B cell (primary cell): ENCODE measurements at regions of chr5 and their contacts with region 1.

Region 1: DNA sequence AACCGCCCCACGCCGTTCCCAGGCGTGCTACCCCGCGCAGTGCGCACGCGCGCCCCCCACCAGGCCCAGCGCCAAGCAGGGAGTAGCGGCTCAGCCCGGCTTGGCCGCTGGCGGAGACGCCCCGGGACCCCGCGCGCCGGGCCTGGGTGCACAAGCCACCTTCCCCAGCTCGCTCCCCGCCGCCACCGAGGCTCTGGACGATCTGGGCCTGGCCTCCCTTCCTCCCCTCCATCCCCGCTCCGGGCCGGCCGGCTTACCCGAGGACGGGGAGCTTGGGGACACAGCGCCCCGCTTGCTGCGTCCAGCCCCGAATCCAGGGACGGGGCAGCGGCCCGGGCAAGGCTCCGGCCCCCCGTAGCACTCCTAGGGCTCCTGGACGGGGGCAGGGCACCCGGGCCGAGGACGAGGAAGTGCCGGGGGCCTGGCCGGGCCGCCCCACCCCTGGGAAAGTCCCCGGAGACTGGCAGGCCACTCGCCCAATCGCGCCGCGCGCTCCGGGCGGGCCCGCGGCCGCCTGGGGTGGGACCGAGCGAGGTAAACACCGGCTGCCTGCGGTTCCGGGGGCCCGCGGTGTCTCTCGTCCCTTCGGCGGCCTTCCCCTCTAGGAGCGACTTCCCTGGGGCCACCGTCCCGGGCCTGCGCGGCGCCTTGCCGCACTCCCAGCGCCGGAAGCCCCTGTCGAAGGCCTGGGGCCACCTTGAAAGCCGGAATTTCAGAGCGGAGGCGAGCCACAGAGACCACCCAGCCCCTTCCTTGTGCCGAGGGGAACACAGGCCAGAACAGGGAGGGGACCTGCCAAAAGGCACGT is at the start of gene TNIP1:
- DNase-seq: peak; percentile 96
- ATAC-seq: peak; percentile 88
- H3K4me3 ChIP-seq: peak within 1 kb of the TSS; percentile 71 to 96 (median 85)
- H3K4me3 Mint-ChIP-seq: peak within 1 kb of the TSS; percentile 87
- H3K27ac ChIP-seq: peak within 1 kb of the TSS; percentile 96 to 100
- H3K27ac Mint-ChIP-seq: peak within 1 kb of the TSS; percentile 88
- H3K4me1 ChIP-seq: peaks cover 83 to 84% of the 10 kb centered on the region in 2 donors
- H3K4me1 Mint-ChIP-seq: peaks cover 82% of the 10 kb centered on the region
- H3K27me3 ChIP-seq: no peaks in the 10 kb centered on the region
- H3K27me3 Mint-ChIP-seq: no peaks in the 10 kb centered on the region
- CTCF ChIP-seq: no peak
- total RNA-seq, gene TNIP1: 294 and 295 TPM in 2 replicates

Region 2: GRCh38 chr5:149114403-149115312 is 1966.2 kb before region 1 on chr5:
- CTCF ChIA-PET with region 1: no interaction called
- POLR2A ChIA-PET with region 1: no interaction called
- intact Hi-C with region 1: no loop called
- DNase-seq: peak; percentile 21
- ATAC-seq: no peak
- H3K4me3 ChIP-seq: no peak overlapping the region
- H3K4me3 Mint-ChIP-seq: no peak overlapping the region
- H3K27ac ChIP-seq: no peak overlapping the region
- H3K27ac Mint-ChIP-seq: no peak overlapping the region
- H3K4me1 ChIP-seq: no peaks in the 10 kb centered on the region
- H3K4me1 Mint-ChIP-seq: no peaks in the 10 kb centered on the region
- H3K27me3 ChIP-seq: no peaks in the 10 kb centered on the region
- H3K27me3 Mint-ChIP-seq: peaks cover 31% of the 10 kb centered on the region
- CTCF ChIP-seq: peak; percentile 44

Region 3: DNA sequence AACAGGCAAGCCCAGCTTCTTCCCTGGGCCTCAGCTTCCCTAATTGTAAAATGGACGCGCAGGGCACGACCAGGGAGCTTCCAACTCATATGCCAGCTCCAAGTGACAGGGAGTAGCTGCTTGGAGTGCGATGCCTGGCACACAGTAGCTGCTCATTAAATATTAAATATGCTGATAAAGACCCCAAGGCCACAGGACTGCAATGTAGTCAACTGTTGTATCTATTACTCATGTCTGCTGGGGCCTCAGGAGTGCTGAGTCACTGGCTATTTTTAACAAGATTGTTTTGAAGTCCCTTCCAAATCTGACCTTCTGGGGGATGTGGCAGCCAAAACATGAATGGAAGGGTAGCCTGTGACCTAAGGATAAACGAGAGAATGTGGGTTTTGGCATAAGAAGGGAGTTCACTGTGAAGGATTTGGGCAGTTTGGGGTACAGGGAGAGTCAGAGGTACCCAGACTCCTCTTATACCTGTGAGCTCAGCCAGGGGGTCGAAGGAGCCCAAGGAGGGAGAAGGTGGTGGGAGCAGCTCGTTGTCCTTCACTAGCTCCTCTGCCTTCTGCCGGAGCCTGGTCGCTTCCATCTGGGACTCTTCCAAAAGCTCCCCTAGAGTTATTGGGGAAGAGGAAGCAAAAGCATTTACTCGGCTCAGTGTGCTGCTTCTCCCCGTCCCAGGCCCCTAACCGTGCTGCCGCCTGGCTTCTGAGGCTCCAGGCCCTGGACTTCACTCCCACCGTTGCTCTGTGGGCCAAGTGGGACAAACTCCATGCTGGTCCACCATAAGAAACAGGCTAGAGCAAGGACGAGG is 17.5 kb before region 1 on chr5:
- CTCF ChIA-PET with region 1: interaction called, 6 read pairs
- POLR2A ChIA-PET with region 1: interaction called, 13 read pairs
- intact Hi-C with region 1: loop called (anchors 1 kb)
- DNase-seq: no peak
- ATAC-seq: no peak
- H3K4me3 ChIP-seq: no peak overlapping the region
- H3K4me3 Mint-ChIP-seq: no peak overlapping the region
- H3K27ac ChIP-seq: no peak overlapping the region
- H3K27ac Mint-ChIP-seq: peak overlapping the region; percentile 72
- H3K4me1 ChIP-seq: peaks cover 44 to 54% of the 10 kb centered on the region in 2 donors
- H3K4me1 Mint-ChIP-seq: peaks cover 69% of the 10 kb centered on the region
- H3K27me3 ChIP-seq: no peaks in the 10 kb centered on the region
- H3K27me3 Mint-ChIP-seq: no peaks in the 10 kb centered on the region
- CTCF ChIP-seq: no peak

Region 4: DNA sequence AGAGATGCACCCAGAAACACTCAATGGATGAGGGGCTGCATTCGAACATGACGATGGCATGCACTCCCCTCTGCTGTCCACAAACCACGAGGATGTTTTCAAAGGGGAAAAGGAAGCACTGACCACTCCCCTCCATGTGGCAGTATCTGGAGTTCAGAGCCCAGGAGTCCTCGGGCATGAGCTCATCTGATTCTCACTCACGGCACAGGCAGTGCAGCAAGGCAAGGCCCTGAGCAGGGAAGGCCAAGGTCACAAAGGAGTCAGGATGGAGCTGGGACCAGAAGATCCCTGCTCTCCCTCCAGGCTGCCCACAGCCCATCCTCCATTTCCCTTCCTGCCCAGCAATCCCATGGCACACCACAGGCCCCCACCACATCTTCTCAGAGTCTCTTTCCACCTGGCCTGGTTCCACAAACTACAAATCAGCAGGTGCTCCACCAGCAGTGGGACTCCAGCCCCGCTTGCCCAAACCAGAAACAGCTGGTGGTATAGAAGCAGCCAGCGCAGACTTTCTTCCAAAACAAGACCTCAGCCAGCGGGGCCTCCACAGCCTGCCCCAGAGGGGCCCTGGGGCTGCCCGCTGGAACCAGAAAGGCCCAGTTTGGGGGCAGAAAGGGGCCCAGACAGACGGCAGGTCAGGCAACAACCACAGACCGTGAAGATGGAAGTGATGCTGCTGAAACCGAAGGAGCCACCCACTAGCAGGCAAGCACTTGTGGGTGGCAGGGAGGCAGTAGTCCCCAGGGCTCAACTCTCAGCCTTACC is 12.2 kb before region 1 on chr5:
- CTCF ChIA-PET with region 1: interaction called, 20 read pairs
- POLR2A ChIA-PET with region 1: interaction called, 13 read pairs
- intact Hi-C with region 1: loop called (anchors 1 kb)
- DNase-seq: peak; percentile 43
- ATAC-seq: peak; percentile 78
- H3K4me3 ChIP-seq: peak overlapping the region in 1 of 5 experiments; percentile 5
- H3K4me3 Mint-ChIP-seq: peak overlapping the region; percentile 52
- H3K27ac ChIP-seq: peak overlapping the region in 1 of 2 donors; percentile 62
- H3K27ac Mint-ChIP-seq: peak overlapping the region; percentile 88
- H3K4me1 ChIP-seq: peaks cover 36 to 55% of the 10 kb centered on the region in 2 donors
- H3K4me1 Mint-ChIP-seq: peaks cover 73% of the 10 kb centered on the region
- H3K27me3 ChIP-seq: no peaks in the 10 kb centered on the region
- H3K27me3 Mint-ChIP-seq: no peaks in the 10 kb centered on the region
- CTCF ChIP-seq: no peak

Region 5: GRCh38 chr5:151094054-151094851 is 13.4 kb after region 1 on chr5:
- CTCF ChIA-PET with region 1: interaction called, 12 read pairs
- POLR2A ChIA-PET with region 1: interaction called, 4 read pairs
- intact Hi-C with region 1: loop called (anchors 1 kb)
- DNase-seq: peak; percentile 79
- ATAC-seq: peak; percentile 76
- H3K4me3 ChIP-seq: peak overlapping the region in 2 of 5 experiments; percentile 2 to 22
- H3K4me3 Mint-ChIP-seq: peak overlapping the region; percentile 82
- H3K27ac ChIP-seq: peak overlapping the region; percentile 26 to 76
- H3K27ac Mint-ChIP-seq: peak overlapping the region; percentile 68
- H3K4me1 ChIP-seq: peaks cover 55 to 62% of the 10 kb centered on the region in 2 donors
- H3K4me1 Mint-ChIP-seq: peaks cover 68% of the 10 kb centered on the region
- H3K27me3 ChIP-seq: no peaks in the 10 kb centered on the region
- H3K27me3 Mint-ChIP-seq: no peaks in the 10 kb centered on the region
- CTCF ChIP-seq: no peak

Region 6: DNA sequence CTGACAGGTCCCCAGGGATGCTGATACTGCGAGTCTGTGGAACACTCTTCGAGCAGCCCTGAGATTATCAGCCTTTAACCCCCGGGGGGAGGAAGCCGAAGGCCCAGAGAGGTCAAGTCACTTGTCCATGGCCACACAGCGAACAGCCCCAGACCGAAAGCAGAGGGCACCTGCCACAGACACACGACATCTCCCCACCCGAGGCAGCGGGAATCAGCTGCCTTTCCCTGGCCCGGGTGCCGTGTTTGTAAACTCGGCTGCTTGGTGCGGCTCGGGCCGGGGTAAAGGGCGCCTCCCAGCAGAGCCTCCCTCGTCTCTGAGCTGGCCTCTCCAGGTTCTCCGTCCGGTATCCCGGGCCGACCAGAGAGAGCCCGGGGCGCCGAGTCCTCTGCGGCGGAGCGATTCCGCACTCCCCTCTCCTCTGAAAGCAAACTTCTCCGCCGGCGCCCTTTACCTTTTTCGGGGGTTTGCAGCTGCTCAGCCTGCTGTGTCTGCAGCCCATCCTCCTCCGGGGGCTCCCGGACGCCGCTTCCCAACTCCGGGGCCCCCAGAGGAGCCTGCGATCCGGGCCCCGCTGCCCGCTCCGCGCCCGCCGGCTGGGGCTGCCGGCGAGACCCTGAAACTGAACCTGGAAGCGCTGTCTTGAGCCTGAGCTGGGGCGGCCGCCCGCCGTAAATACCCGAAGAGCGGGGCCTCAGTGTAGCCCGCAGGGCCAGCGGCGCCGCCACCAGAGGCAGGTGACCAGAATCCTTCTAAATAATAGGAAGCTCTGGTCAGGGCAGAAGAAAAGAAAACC is 142.8 kb after region 1 on chr5 and contains the start of gene CCDC69:
- CTCF ChIA-PET with region 1: no interaction called
- POLR2A ChIA-PET with region 1: no interaction called
- intact Hi-C with region 1: loop called (anchors 5 kb)
- DNase-seq: peak; percentile 75
- ATAC-seq: peak; percentile 42
- H3K4me3 ChIP-seq: peak within 1 kb of the TSS; percentile 70 to 86 (median 80)
- H3K4me3 Mint-ChIP-seq: peak within 1 kb of the TSS; percentile 88
- H3K27ac ChIP-seq: peak within 1 kb of the TSS; percentile 94 to 99
- H3K27ac Mint-ChIP-seq: peak within 1 kb of the TSS; percentile 92
- H3K4me1 ChIP-seq: peaks cover 64 to 75% of the 10 kb centered on the region in 2 donors
- H3K4me1 Mint-ChIP-seq: peaks cover 71% of the 10 kb centered on the region
- H3K27me3 ChIP-seq: no peaks in the 10 kb centered on the region
- H3K27me3 Mint-ChIP-seq: no peaks in the 10 kb centered on the region
- CTCF ChIP-seq: no peak
- total RNA-seq, gene CCDC69: 125 and 129 TPM in 2 replicates